ENCODE measurements at regions of chr2 and their contacts with region 1.

Region 1: GRCh38 chr2:76599732-76600368 is 889.1 kb upstream of the GCFC2 start:
- DNase-seq: peak; percentile 51 to 82 (median 70)
- ATAC-seq: peak; percentile 87
- H3K4me3 ChIP-seq: no peak overlapping the region
- H3K27ac ChIP-seq: no peak overlapping the region
- H3K4me1 ChIP-seq: no peaks in the 10 kb centered on the region
- H3K27me3 ChIP-seq: no peaks in the 10 kb centered on the region
- CTCF ChIP-seq: peak; percentile 56 to 90 (median 81)
- POLR2A ChIP-seq: no peak

Region 2: DNA sequence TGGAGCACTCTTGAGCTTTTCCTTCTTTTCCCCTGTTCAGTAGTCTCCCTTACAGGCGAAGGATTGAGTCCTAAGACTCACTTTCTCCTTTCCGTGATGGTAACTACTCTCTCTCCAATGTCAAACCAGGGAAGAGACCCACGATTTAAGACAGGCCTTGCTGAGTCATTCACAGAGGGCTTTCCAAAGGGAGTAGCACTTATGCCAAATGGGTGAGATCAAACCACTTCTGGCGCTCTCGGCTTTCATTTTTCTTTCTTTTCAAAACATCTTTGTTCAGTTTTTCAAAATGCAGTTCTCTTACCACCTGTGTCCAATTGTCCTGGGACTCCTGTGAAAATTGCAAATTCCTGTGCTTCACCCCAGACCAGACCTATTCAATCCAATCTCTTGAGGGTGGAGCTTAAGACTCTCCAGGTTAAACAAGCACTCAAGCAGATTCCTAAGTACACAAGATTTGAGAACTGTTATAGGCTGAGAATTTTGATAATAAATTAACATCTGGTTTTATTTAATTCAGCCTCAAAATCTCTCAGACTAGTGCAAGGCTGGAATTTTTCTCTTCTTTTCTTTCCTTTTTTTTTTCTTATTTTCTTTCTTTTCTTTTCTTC is 967.7 kb before region 1 on chr2:
- intact Hi-C with region 1: loop called (anchors 10 kb)
- DNase-seq: no peak
- ATAC-seq: no peak
- H3K4me3 ChIP-seq: no peak overlapping the region
- H3K27ac ChIP-seq: peak overlapping the region in 2 of 4 donors; percentile 5 to 38
- H3K4me1 ChIP-seq: peaks cover 13% of the 10 kb centered on the region
- H3K27me3 ChIP-seq: no peaks in the 10 kb centered on the region
- CTCF ChIP-seq: no peak
- POLR2A ChIP-seq: no peak

Region 3: DNA sequence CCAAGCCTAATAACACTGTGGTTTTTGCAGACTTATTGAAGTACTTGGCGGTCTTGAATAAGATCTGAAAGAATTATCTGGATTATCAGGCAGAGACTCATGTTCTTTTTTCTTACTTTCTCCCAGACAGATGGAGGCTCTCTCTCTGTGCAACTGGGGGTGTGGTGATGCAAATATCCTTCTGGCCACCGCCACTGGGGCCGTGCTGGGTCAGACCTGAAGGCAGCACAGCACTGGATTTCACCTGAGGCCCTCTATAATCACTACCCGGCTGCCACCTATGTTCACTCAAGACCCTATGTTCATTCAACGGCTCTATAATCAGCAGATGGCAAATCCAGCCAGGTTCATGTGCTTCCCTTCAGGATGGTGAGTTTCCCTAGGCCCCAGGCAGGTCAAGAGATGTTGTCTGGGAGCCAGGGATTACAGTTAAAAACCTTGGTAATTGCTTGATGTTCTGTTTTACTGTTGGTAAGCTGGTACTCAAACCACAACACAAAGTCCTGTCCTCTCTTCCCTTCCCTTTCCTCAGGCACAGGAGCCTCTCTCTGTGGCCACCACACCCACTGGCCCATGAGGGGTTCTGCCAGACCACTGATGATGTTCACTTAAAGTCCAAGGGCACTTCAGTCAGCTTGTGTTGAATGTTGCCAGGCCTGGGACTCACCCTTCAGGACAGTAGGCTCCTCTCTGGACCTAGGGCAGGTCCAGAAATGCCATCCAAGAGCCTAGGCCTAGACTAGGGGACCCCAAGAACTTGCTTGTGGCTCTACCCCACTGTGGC is 683.8 kb before region 1 on chr2:
- intact Hi-C with region 1: no loop called
- DNase-seq: no peak
- ATAC-seq: no peak
- H3K4me3 ChIP-seq: no peak overlapping the region
- H3K27ac ChIP-seq: no peak overlapping the region
- H3K4me1 ChIP-seq: no peaks in the 10 kb centered on the region
- H3K27me3 ChIP-seq: no peaks in the 10 kb centered on the region
- CTCF ChIP-seq: no peak
- POLR2A ChIP-seq: no peak

Region 4: DNA sequence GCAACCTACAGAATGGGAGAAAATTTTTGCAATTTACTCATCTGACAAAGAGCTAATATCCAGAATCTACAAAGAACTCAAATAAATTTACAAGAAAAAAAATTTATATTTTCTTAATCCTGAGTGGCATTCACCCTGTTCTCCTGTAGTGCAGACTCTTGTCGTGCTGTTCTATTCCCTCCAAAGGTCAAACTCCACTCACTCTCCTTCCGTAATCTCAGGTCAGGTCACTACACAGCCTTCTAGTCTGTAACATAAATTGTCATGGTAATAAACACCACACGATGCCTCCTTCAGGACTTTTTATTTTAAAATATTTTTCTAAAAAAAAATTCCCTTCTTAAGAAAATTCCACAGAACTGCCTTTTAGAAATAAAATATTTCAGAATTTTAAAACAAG is 471.2 kb before region 1 on chr2:
- intact Hi-C with region 1: no loop called
- DNase-seq: no peak
- ATAC-seq: no peak
- H3K4me3 ChIP-seq: no peak overlapping the region
- H3K27ac ChIP-seq: no peak overlapping the region
- H3K4me1 ChIP-seq: peaks cover 12% of the 10 kb centered on the region
- H3K27me3 ChIP-seq: no peaks in the 10 kb centered on the region
- CTCF ChIP-seq: no peak
- POLR2A ChIP-seq: no peak

Region 5: GRCh38 chr2:76211991-76212985 is 387.6 kb before region 1 on chr2:
- intact Hi-C with region 1: loop called (anchors 5 kb)
- DNase-seq: no peak
- ATAC-seq: no peak
- H3K4me3 ChIP-seq: no peak overlapping the region
- H3K27ac ChIP-seq: no peak overlapping the region
- H3K4me1 ChIP-seq: no peaks in the 10 kb centered on the region
- H3K27me3 ChIP-seq: no peaks in the 10 kb centered on the region
- CTCF ChIP-seq: no peak
- POLR2A ChIP-seq: no peak

Measured in body of pancreas (tissue), 4 donors.